Activated CD4-positive, alpha-beta T cell treated with anti-CD3 and anti-CD28 coated beads, Interleukin-2, amount 10 ng/mL, durations not matched to agents 24 days and 14 days (primary cell): ENCODE measurements at regions of chr12 and their contacts with region 1.

Region 1: DNA sequence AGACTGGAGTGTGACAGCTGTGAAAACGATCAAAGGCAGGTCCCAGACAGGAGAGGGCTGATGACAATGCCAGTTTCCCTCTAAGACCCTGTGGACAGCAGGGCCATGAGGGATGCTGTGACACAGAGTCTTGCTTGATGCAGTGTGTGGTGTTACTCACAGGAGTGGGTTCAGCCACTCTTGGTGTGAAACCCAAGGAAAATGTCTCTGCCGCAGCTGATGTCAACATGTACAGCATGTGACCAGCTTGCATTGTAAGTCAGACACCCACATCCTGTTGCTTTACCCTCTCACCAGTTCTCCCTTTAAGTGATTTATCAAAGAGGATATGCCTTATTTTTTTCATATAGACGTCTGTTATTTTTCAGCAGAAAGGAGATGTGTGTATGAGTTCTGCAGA is 268.6 kb downstream of the BTG1 start:
- DNase-seq: peak; percentile 95
- H3K4me3 Mint-ChIP-seq: peak overlapping the region; percentile 80
- H3K27ac Mint-ChIP-seq: peak overlapping the region; percentile 97
- H3K4me1 Mint-ChIP-seq: peaks cover 46% of the 10 kb centered on the region
- H3K27me3 Mint-ChIP-seq: no peaks in the 10 kb centered on the region

Region 2: GRCh38 chr12:91778938-91779400 is 98.1 kb before region 1 on chr12:
- intact Hi-C with region 1: loop called (anchors 1 kb)
- DNase-seq: peak; percentile 77
- H3K4me3 Mint-ChIP-seq: peak overlapping the region; percentile 58
- H3K27ac Mint-ChIP-seq: peak overlapping the region; percentile 73
- H3K4me1 Mint-ChIP-seq: peaks cover 22% of the 10 kb centered on the region
- H3K27me3 Mint-ChIP-seq: peaks cover 2% of the 10 kb centered on the region

Region 3: DNA sequence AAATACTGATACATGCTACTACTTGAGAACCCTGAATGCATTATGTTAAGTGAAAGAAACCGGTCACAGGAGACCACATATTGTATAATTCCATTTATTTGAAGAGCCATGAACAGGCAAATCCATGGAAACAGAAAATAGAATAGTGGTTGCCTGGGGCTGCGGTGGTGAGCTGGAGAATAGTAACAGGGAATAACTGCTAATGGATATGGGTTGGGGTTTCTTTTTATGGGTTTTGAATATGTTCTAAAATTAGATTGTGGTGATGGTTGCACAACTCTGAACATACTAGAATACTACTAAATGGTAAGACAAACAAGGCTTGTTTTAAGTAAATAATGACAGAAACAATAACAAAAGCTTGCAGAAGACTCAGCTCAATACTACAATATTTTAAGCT is 24.4 kb before region 1 on chr12:
- intact Hi-C with region 1: loop called (anchors 1 kb)
- DNase-seq: no peak
- H3K4me3 Mint-ChIP-seq: no peak overlapping the region
- H3K27ac Mint-ChIP-seq: no peak overlapping the region
- H3K4me1 Mint-ChIP-seq: peaks cover 9% of the 10 kb centered on the region
- H3K27me3 Mint-ChIP-seq: peaks cover 3% of the 10 kb centered on the region

Region 4: DNA sequence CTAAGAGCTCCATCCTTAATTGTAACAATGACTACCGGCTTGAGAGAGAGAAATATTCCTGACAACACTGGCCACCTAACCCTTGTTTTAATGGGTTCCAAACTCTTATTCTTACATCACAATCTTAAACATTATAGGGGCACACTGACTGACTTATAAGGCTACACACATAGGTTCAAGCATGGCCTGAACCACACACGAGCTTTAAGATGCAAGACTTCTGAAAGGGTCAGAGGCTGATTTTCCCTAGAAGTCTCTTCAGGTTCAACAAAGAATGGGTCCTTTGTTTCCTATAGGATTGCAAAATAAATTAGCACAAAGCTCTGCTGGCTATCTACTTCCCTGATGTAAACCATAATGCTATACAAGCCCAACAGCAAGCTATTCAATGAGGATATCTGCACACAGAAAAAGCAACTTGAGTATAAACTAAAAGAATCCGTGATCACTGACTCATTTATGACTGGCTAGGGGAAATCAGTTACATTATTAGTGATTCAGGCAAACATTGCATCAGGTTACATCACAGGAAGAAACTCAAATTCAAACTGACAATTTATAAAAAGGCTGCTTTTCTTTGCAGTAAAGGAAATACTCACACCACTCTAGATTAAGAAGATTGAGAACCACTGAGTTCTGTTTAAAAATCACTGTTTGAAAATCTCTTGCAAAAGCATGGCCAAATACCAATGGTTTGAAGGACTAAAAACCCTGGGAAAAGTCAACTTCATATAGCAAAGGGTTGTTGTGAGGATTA is 260.1 kb after region 1 on chr12:
- intact Hi-C with region 1: loop called (anchors 5 kb)
- DNase-seq: peak; percentile 60
- H3K4me3 Mint-ChIP-seq: peak overlapping the region; percentile 99
- H3K27ac Mint-ChIP-seq: peak overlapping the region; percentile 82
- H3K4me1 Mint-ChIP-seq: peaks cover 66% of the 10 kb centered on the region
- H3K27me3 Mint-ChIP-seq: no peaks in the 10 kb centered on the region

Region 5: GRCh38 chr12:92469837-92470236 is 592.8 kb after region 1 on chr12:
- intact Hi-C with region 1: loop called (anchors 5 kb)
- DNase-seq: no peak
- H3K4me3 Mint-ChIP-seq: no peak overlapping the region
- H3K27ac Mint-ChIP-seq: peak overlapping the region; percentile 66
- H3K4me1 Mint-ChIP-seq: peaks cover 26% of the 10 kb centered on the region
- H3K27me3 Mint-ChIP-seq: no peaks in the 10 kb centered on the region